H1 (cell line): ENCODE measurements at regions of chr5 and their contacts with region 1.

Region 1: DNA sequence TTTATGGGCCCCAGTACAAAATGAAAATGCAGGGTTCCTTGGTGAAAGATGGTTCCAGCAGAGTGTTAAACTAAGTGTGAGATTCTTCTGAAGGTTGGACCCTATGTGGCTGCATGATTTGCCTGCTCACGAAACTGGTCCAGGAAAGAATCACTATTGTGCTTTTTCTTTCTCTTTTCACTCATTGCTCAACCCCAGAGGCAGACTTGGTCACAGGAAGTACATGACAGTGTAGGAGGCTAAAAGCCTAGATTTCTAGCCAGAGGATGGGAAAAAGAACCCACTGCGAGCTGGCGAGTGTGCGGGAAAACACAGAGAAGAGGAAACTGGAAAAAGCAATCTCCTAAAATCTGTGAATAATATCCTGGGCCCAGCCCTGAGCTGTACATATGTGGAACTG is 18.6 kb downstream of the SLC36A2 start:
- DNase-seq: no peak
- H3K4me3 ChIP-seq: no peak overlapping the region
- H3K27ac ChIP-seq: no peak overlapping the region
- H3K4me1 ChIP-seq: peaks cover 0 to 4% (median 2%) of the 10 kb centered on the region in 4 experiments; a peak in 2 of 7 replicates
- H3K27me3 ChIP-seq: no peaks in the 10 kb centered on the region
- CTCF ChIP-seq: no peak
- EP300 ChIP-seq: no peak
- POLR2A ChIP-seq: no peak
- RAD21 ChIP-seq: no peak

Region 2: DNA sequence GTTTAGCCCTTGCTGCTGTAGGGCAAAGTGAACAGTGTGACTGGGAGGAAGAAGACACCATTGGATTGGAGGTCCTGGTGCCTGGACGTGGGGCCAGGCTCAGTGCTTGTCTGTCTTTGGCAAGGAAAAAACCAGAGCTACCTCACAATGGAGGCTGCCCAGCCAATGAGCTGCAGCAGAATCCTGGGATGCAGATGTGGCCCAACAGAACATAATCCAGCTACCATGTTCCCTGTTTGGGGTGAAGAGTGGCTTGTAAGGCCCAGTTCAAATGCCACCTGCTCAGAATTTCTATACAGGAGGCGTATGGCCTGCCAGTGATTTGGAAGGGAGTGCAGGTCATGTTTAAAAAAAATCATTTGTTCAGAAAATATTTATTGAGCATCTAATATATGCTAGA is 25.1 kb before region 1 on chr5 and contains the start of gene SLC36A3:
- CTCF ChIA-PET with region 1: no interaction called
- POLR2A ChIA-PET with region 1: no interaction called
- DNase-seq: no peak
- H3K4me3 ChIP-seq: no peak within 1 kb of the TSS
- H3K27ac ChIP-seq: no peak within 1 kb of the TSS
- H3K4me1 ChIP-seq: no peaks in the 10 kb centered on the region
- H3K27me3 ChIP-seq: no peaks in the 10 kb centered on the region
- CTCF ChIP-seq: no peak
- EP300 ChIP-seq: no peak
- POLR2A ChIP-seq: no peak
- RAD21 ChIP-seq: no peak
- total RNA-seq, gene SLC36A3: not detected in 2 replicates

Region 3: GRCh38 chr5:151340004-151340403 is 11.3 kb after region 1 on chr5:
- CTCF ChIA-PET with region 1: no interaction called
- POLR2A ChIA-PET with region 1: no interaction called
- DNase-seq: no peak
- H3K4me3 ChIP-seq: no peak overlapping the region
- H3K27ac ChIP-seq: no peak overlapping the region
- H3K4me1 ChIP-seq: peaks cover 0 to 5% (median under 1%) of the 10 kb centered on the region in 4 experiments; a peak in 3 of 7 replicates
- H3K27me3 ChIP-seq: peaks cover 0 to 3% (median under 1%) of the 10 kb centered on the region in 4 experiments; a peak in 2 of 7 replicates
- CTCF ChIP-seq: no peak
- EP300 ChIP-seq: no peak
- POLR2A ChIP-seq: no peak
- RAD21 ChIP-seq: no peak

Region 4: GRCh38 chr5:151357801-151358200 is 29.1 kb after region 1 on chr5:
- CTCF ChIA-PET with region 1: no interaction called
- POLR2A ChIA-PET with region 1: no interaction called
- DNase-seq: no peak
- H3K4me3 ChIP-seq: peak overlapping the region in 1 of 4 experiments; percentile 18; a peak in 1 of 8 replicates
- H3K27ac ChIP-seq: no peak overlapping the region
- H3K4me1 ChIP-seq: peaks cover 0 to 14% (median 4%) of the 10 kb centered on the region in 4 experiments; a peak in 4 of 7 replicates
- H3K27me3 ChIP-seq: no peaks in the 10 kb centered on the region
- CTCF ChIP-seq: no peak
- EP300 ChIP-seq: no peak
- POLR2A ChIP-seq: no peak
- RAD21 ChIP-seq: no peak

Region 5: GRCh38 chr5:151384106-151384505 is 55.4 kb after region 1 on chr5:
- CTCF ChIA-PET with region 1: interaction called, 14 read pairs
- POLR2A ChIA-PET with region 1: no interaction called
- DNase-seq: no peak
- H3K4me3 ChIP-seq: no peak overlapping the region
- H3K27ac ChIP-seq: no peak overlapping the region
- H3K4me1 ChIP-seq: peaks cover 5 to 22% (median 18%) of the 10 kb centered on the region in 4 experiments
- H3K27me3 ChIP-seq: no peaks in the 10 kb centered on the region
- CTCF ChIP-seq: no peak
- EP300 ChIP-seq: no peak
- POLR2A ChIP-seq: no peak
- RAD21 ChIP-seq: no peak